Posterior vena cava (tissue), 2 donors: ENCODE measurements at regions of chr1 and their contacts with region 1.

Region 1: GRCh38 chr1:170729225-170730002 is 65.5 kb downstream of the PRRX1 start:
- DNase-seq: no peak

Region 2: GRCh38 chr1:168803806-168804510 is 1925.5 kb before region 1 on chr1:
- intact Hi-C with region 1: loop called in 1 of 2 experiments (anchors 10 kb)
- DNase-seq: no peak

Region 3: GRCh38 chr1:170670802-170671628 is 58.4 kb before region 1 on chr1:
- intact Hi-C with region 1: loop called in 1 of 2 experiments (anchors 10 kb)
- DNase-seq: peak; percentile 93